Caco-2 (cell line): ENCODE measurements at regions of chr1 and their contacts with region 1.

Region 1: DNA sequence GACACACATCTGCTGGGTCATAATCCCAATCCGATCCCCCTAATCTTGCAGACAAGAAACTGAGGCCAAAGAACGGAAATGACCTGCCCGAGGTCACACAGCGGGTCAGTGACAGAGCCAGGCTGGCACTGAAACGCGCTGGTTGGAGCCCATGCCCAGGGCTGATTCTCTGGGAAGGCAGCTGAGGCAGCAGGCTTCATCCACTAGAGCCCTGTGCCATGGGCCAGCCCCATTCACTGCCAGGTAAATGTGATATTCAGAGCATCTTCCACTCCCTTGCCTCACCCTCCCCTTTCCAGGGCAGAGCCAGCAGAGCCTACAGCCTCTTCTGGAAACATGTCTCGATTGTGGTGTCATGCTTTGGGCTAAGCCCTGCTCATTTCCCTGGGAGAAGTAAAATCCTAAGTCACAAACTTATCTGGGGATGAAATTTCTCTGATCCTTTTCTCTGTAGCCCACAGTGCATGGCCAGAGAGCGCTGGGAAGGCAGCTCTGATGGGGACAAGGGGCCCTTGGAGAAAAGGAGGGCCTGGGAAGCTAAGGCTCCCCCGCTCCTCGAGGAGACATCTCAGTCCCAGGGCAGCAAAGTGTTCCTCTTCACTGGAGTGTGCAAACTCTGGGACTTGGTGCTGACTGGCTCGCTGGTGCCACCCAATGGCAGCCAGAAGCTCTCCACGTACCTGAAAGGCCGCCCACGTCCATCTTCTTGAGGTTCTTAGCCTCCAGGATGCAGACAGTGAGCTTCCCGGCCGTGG is 110.4 kb downstream of the SYT2 start:
- DNase-seq: peak; percentile 74 to 78
- H3K4me3 ChIP-seq: no peak overlapping the region
- H3K4me3 Mint-ChIP-seq: no peak overlapping the region
- H3K27ac Mint-ChIP-seq: no peak overlapping the region
- H3K4me1 ChIP-seq: no peaks in the 10 kb centered on the region
- H3K4me1 Mint-ChIP-seq: no peaks in the 10 kb centered on the region
- H3K27me3 ChIP-seq: no peaks in the 10 kb centered on the region
- H3K27me3 Mint-ChIP-seq: no peaks in the 10 kb centered on the region
- CTCF ChIP-seq: peak; percentile 72 to 88

Region 2: GRCh38 chr1:202501281-202501680 is 98.6 kb before region 1 on chr1:
- CTCF ChIA-PET with region 1: interaction called, 5 read pairs
- POLR2A ChIA-PET with region 1: no interaction called
- intact Hi-C with region 1: loop called (anchors 1 kb)
- DNase-seq: no peak
- H3K4me3 ChIP-seq: no peak overlapping the region
- H3K4me3 Mint-ChIP-seq: no peak overlapping the region
- H3K27ac Mint-ChIP-seq: no peak overlapping the region
- H3K4me1 ChIP-seq: peaks cover 10% of the 10 kb centered on the region
- H3K4me1 Mint-ChIP-seq: peaks cover 9% of the 10 kb centered on the region
- H3K27me3 ChIP-seq: no peaks in the 10 kb centered on the region
- H3K27me3 Mint-ChIP-seq: no peaks in the 10 kb centered on the region
- CTCF ChIP-seq: peak in 1 of 2 experiments; percentile 26

Region 3: GRCh38 chr1:202710070-202711045 is 110.5 kb after region 1 on chr1 and contains the start of gene SYT2:
- CTCF ChIA-PET with region 1: no interaction called
- POLR2A ChIA-PET with region 1: no interaction called
- intact Hi-C with region 1: loop called (anchors 10 kb)
- DNase-seq: peak in 1 of 2 experiments; percentile 48
- H3K4me3 ChIP-seq: peak within 1 kb of the TSS; percentile 33
- H3K4me3 Mint-ChIP-seq: peak within 1 kb of the TSS; percentile 71
- H3K27ac Mint-ChIP-seq: peak within 1 kb of the TSS; percentile 42
- H3K4me1 ChIP-seq: 0 out of 2 replicates have a peak, but pooled peaks cover 10% of the 10 kb centered on the region
- H3K4me1 Mint-ChIP-seq: peaks cover 14% of the 10 kb centered on the region
- H3K27me3 ChIP-seq: peaks cover 4% of the 10 kb centered on the region; the same call in 1 of the 2 replicates
- H3K27me3 Mint-ChIP-seq: peaks cover 26% of the 10 kb centered on the region
- CTCF ChIP-seq: no peak
- total RNA-seq, gene SYT2: 0.07 and 0.09 TPM in 2 replicates